Upper lobe of right lung (tissue), 1 donor: ENCODE measurements at regions of chr9 and their contacts with region 1.

Region 1: DNA sequence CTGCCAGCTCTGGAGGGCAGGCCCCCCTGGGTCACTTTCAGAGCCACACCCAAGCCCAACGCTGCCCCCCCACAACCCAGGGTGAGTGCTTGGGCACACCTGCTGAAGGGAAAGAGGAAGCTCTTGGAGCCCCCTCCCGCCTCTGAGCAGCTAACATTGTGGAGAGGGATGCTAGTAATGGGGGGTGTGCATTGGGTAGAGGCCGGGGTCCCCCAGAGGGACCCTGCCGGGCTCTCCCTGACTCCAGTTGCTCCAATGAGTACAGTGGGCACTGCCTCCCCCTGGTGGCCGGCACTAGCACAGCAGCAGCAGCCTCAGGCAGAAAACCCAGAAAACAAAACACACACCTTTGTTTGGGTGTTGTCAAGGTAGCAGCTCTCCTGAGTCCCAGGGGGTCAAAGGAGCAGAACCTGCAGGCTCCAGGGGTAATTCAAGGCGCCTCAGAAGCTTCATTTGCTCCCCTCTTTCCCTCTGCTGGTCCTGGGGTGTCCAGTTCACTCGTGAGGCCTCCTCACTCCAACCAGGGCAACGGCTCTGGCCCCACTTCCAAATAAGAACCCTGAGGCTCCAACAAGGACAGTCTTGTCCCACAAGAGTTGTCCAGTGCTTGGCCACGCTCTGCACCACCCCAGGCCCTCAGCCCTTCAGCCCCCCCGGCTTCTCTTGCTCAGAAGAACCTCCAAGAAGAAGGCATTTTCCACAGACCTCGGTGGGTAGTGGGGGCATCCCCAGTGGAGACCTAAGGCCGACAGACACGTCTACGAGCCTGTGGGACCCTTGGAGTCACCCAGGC is 16.1 kb downstream of the GBGT1 start:
- DNase-seq: peak; percentile 90
- ATAC-seq: peak; percentile 46
- H3K4me3 ChIP-seq: peak overlapping the region; percentile 74
- H3K27ac ChIP-seq: peak overlapping the region; percentile 86
- H3K4me1 ChIP-seq: peaks cover 36% of the 10 kb centered on the region
- H3K27me3 ChIP-seq: no peaks in the 10 kb centered on the region
- CTCF ChIP-seq: peak; percentile 98

Region 2: DNA sequence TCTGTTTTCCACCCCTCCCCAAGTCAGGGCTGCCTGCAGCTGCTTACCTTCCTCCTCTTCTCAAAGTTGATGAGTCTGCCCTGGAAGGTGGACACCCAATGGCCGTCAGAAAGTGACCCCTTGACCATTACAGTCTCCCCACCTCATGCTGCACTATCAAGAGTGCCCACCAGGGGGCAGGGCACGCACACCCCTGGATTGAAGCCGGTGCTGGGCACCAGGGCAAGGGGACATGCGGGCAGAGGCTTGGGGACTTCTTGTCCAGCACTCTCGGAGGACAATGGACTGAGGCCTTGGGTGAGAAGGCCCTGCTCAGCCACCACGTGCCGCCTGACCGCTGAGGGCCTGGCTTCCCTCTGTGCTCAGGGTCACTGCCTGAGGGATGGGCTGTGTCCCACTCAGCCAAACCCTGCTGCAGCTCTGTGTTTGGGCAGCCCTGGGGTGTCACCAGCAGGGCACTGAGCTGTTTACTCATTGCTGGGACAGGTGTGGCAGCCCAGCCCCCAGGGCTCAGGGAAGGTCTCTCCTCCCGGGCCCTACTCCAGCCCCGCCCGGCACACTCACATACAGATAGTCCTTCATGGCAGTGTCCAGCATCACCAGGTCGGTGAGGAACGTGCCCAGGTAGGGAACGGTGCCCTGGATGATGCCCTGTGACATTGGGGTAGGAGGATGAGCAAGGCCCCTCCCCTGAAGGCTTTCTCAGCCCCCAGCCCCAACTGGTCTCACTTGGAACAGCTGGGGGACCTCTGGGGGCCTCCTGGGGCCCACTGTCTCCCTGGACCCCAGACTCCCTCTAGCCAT is 44.2 kb before region 1 on chr9:
- intact Hi-C with region 1: loop called (anchors 2 kb)
- DNase-seq: peak; percentile 84
- ATAC-seq: peak; percentile 87
- H3K4me3 ChIP-seq: no peak overlapping the region
- H3K27ac ChIP-seq: no peak overlapping the region
- H3K4me1 ChIP-seq: no peaks in the 10 kb centered on the region
- H3K27me3 ChIP-seq: no peaks in the 10 kb centered on the region
- CTCF ChIP-seq: peak; percentile 96